ENCODE measurements at regions of chr5 and their contacts with region 1.

Region 1: GRCh38 chr5:142888469-142889085 is 118.4 kb downstream of the ARHGAP26 start:
- DNase-seq: peak; percentile 60 to 72
- ATAC-seq: peak; percentile 81 to 92
- H3K4me3 ChIP-seq: no peak overlapping the region
- H3K27ac ChIP-seq: no peak overlapping the region
- H3K4me1 ChIP-seq: 0 out of 3 replicates have a peak, but pooled peaks cover 3% of the 10 kb centered on the region
- CTCF ChIP-seq: peak; percentile 91
- EP300 ChIP-seq: no peak
- POLR2A ChIP-seq: no peak
- RAD21 ChIP-seq: peak; percentile 90 to 93

Region 2: DNA sequence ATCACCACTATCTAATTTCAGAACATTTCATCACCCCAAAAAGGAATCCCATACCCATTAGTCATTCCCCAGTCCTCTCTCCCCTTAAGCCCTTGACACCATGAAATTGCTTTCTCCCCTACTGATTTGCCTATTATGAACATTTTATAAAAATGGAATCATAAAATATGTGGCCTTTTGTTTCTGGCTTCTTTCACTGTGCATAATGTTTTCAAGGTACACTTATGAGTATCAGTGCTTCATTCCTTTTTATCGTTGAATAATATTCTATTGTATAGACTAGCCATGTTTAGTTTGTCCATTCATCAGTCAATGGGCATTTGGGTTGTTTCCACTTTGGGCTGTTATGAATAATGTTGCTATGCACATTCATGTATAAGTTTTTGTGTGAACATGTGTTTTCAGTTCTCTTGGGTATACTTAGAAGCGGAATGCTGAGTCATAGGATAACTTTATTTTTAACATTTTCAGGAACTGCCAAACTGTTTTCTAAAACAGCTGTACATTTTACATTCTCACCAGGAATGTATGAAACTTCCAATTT is 162.3 kb before region 1 on chr5:
- CTCF ChIA-PET with region 1: interaction called, 1,307 read pairs
- POLR2A ChIA-PET with region 1: interaction called, 3 read pairs
- DNase-seq: no peak
- ATAC-seq: no peak
- H3K4me3 ChIP-seq: no peak overlapping the region
- H3K27ac ChIP-seq: peak overlapping the region in 1 of 2 experiments; percentile 46; a peak in 2 of 6 replicates
- H3K4me1 ChIP-seq: peaks cover 10% of the 10 kb centered on the region; the same call in 2 of the 3 replicates
- CTCF ChIP-seq: no peak
- EP300 ChIP-seq: no peak
- POLR2A ChIP-seq: no peak
- RAD21 ChIP-seq: no peak

Region 3: DNA sequence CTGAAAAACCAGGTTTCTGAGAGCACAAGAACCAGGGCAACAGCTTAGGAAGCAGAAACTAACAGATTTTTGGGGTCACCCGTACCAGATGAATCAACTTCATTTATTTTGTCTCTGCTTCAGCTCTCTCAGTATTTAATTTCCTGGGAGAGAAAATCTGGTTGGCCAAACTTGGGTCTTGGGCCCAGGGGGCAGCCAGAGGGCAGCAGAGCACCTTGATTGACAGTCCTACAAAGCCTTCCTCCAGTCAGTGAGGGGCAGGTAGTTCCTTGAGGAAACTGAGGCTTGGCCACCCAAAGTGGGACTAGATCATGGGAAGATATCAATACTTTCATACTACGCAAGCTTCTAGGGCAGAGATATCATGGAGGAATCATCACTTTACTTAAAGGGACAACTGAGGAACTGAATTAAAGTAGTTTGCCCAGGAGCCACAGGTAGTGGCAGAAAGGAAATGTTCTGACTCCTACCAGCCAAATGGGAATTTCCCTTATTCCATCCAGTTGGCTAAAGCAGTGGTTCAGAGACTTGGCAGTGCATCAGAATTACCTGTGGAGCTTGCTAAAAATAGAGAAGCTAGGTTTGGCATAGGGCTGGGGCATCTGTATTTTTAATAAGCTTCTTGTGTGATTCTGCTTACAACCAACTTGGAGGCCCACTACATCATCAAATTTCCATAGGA is 139.9 kb before region 1 on chr5:
- CTCF ChIA-PET with region 1: interaction called, 473 read pairs
- POLR2A ChIA-PET with region 1: no interaction called
- DNase-seq: peak in 1 of 2 experiments; percentile 44
- ATAC-seq: peak; percentile 60 to 82; a peak in 4 of 6 replicates
- H3K4me3 ChIP-seq: no peak overlapping the region
- H3K27ac ChIP-seq: no peak overlapping the region
- H3K4me1 ChIP-seq: peaks cover 10% of the 10 kb centered on the region; the same call in 2 of the 3 replicates
- CTCF ChIP-seq: peak; percentile 73
- EP300 ChIP-seq: no peak
- POLR2A ChIP-seq: no peak
- RAD21 ChIP-seq: peak; percentile 90 to 91

Region 4: GRCh38 chr5:142845402-142845921 is 43.1 kb before region 1 on chr5:
- CTCF ChIA-PET with region 1: interaction called, 10 read pairs
- POLR2A ChIA-PET with region 1: no interaction called
- DNase-seq: no peak
- ATAC-seq: peak in 1 of 2 experiments; percentile 33; a peak in 3 of 6 replicates
- H3K4me3 ChIP-seq: no peak overlapping the region
- H3K27ac ChIP-seq: peak overlapping the region in 1 of 2 experiments; percentile 57; a peak in 3 of 6 replicates
- H3K4me1 ChIP-seq: peaks cover 26% of the 10 kb centered on the region
- CTCF ChIP-seq: no peak
- EP300 ChIP-seq: no peak
- POLR2A ChIP-seq: no peak
- RAD21 ChIP-seq: no peak

Region 5: DNA sequence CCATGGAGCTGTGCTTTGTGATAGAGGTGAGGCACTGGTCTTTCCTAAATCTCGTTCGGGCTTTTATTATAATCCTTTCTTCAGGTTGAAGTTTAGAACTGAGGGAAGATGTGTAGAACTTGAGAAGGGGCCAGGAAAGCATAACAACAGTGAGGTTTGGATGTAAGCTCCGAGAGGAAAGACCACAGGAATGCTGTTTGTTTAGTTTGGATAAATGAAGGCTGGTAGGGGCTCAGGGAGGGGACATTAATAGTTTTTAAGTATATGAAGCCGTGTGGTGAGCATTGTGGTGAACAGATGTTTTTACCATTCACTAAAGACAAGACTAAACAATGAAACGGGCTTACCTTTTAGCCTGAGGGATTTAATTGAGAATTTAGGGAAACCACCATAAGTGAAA is 12.3 kb after region 1 on chr5:
- CTCF ChIA-PET with region 1: interaction called, 42 read pairs
- POLR2A ChIA-PET with region 1: no interaction called
- DNase-seq: no peak
- ATAC-seq: no peak
- H3K4me3 ChIP-seq: no peak overlapping the region
- H3K27ac ChIP-seq: no peak overlapping the region
- H3K4me1 ChIP-seq: no peaks in the 10 kb centered on the region
- CTCF ChIP-seq: no peak
- EP300 ChIP-seq: no peak
- POLR2A ChIP-seq: no peak
- RAD21 ChIP-seq: no peak

Region 6: GRCh38 chr5:142906863-142907671 is 18.5 kb after region 1 on chr5:
- CTCF ChIA-PET with region 1: interaction called, 12 read pairs
- POLR2A ChIA-PET with region 1: no interaction called
- DNase-seq: no peak
- ATAC-seq: no peak
- H3K4me3 ChIP-seq: no peak overlapping the region
- H3K27ac ChIP-seq: no peak overlapping the region
- H3K4me1 ChIP-seq: no peaks in the 10 kb centered on the region
- CTCF ChIP-seq: no peak
- EP300 ChIP-seq: no peak
- POLR2A ChIP-seq: no peak
- RAD21 ChIP-seq: no peak